Endothelial cell of umbilical vein (primary cell): ENCODE measurements at regions of chr17 and their contacts with region 1.

Region 1: GRCh38 chr17:27892866-27893769 is at the start of gene LYRM9:
- DNase-seq: peak; percentile 91
- H3K4me3 ChIP-seq: peak within 1 kb of the TSS; percentile 8 to 66 (median 61)
- H3K27ac ChIP-seq: peak within 1 kb of the TSS; percentile 30
- H3K4me1 ChIP-seq: peaks cover 11% of the 10 kb centered on the region
- H3K27me3 ChIP-seq: peaks cover 6 to 17% of the 10 kb centered on the region in 2 experiments
- CTCF ChIP-seq: peak; percentile 84 to 97
- POLR2A ChIP-seq: peak; percentile 66
- total RNA-seq, gene LYRM9: 3.1 and 4.0 TPM in 2 replicates

Region 2: GRCh38 chr17:27644586-27644985 is 248.5 kb before region 1 on chr17:
- CTCF ChIA-PET with region 1: no interaction called
- POLR2A ChIA-PET with region 1: no interaction called
- dilution Hi-C with region 1: no loop called
- intact Hi-C with region 1: no loop called
- DNase-seq: no peak
- H3K4me3 ChIP-seq: no peak overlapping the region
- H3K27ac ChIP-seq: no peak overlapping the region
- H3K4me1 ChIP-seq: no peaks in the 10 kb centered on the region
- H3K27me3 ChIP-seq: no peaks in the 10 kb centered on the region
- CTCF ChIP-seq: no peak
- POLR2A ChIP-seq: no peak

Region 3: DNA sequence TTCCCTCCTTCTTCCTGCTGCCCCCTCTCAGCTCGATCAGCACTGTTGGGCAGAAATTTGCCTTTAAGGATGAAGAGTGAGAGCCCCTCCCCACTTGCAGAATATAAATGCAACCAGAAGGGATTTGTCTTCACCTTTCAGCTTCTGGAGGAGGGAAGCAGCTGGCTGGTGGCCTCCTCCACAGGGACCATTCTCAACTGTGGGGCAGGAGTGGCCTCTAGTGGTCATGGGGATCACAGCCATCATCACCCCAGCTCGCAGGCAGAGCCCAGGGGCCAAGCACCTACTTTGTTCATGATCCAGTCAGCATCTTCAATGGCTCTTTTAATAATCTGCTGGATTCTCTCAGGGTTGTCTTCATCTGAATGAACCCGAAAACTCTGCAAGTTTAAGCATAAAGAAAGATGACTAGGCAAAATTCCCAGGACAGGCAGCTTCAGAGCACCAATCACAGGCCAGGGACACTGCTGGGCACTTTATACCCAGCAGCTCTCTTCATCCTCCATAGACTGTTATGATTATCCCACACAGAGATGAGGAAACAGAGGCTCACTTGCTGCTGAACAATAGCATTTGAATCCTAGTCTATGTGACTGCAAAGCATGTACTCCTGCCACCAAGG is 13.0 kb before region 1 on chr17:
- CTCF ChIA-PET with region 1: interaction called, 62 read pairs
- POLR2A ChIA-PET with region 1: no interaction called
- dilution Hi-C with region 1: no loop called
- intact Hi-C with region 1: no loop called
- DNase-seq: peak; percentile 60
- H3K4me3 ChIP-seq: no peak overlapping the region
- H3K27ac ChIP-seq: no peak overlapping the region
- H3K4me1 ChIP-seq: no peaks in the 10 kb centered on the region
- H3K27me3 ChIP-seq: no peaks in the 10 kb centered on the region
- CTCF ChIP-seq: peak; percentile 91 to 93
- POLR2A ChIP-seq: no peak

Region 4: DNA sequence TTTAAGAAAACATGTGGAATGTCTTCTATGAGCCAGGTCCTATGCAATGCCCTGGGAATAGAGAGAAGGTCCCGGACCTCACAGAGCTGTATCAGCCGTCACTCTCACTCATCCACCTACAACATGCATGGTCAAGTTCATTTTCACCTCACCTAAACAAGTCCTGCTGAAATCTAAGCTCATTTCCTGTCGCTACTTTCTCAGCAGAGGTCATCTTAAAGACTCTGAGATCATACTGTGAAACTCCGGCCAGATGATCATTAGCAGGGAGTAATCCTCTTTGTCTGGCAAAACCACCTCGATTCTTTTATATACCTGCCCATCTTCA is 66.2 kb after region 1 on chr17:
- CTCF ChIA-PET with region 1: interaction called, 10 read pairs
- POLR2A ChIA-PET with region 1: no interaction called
- dilution Hi-C with region 1: no loop called
- intact Hi-C with region 1: no loop called
- DNase-seq: no peak
- H3K4me3 ChIP-seq: no peak overlapping the region
- H3K27ac ChIP-seq: no peak overlapping the region
- H3K4me1 ChIP-seq: no peaks in the 10 kb centered on the region
- H3K27me3 ChIP-seq: peaks cover 0 to 4% of the 10 kb centered on the region in 2 experiments
- CTCF ChIP-seq: no peak
- POLR2A ChIP-seq: no peak

Region 5: GRCh38 chr17:28041068-28041843 is 148.1 kb after region 1 on chr17:
- CTCF ChIA-PET with region 1: interaction called, 6 read pairs
- POLR2A ChIA-PET with region 1: interaction called, 7 read pairs
- dilution Hi-C with region 1: no loop called
- intact Hi-C with region 1: loop called (anchors 2 kb)
- DNase-seq: peak; percentile 100
- H3K4me3 ChIP-seq: peak overlapping the region in 1 of 3 experiments; percentile 95
- H3K27ac ChIP-seq: no peak overlapping the region
- H3K4me1 ChIP-seq: peaks cover 31% of the 10 kb centered on the region
- H3K27me3 ChIP-seq: no peaks in the 10 kb centered on the region
- CTCF ChIP-seq: no peak
- POLR2A ChIP-seq: peak; percentile 87

Region 6: DNA sequence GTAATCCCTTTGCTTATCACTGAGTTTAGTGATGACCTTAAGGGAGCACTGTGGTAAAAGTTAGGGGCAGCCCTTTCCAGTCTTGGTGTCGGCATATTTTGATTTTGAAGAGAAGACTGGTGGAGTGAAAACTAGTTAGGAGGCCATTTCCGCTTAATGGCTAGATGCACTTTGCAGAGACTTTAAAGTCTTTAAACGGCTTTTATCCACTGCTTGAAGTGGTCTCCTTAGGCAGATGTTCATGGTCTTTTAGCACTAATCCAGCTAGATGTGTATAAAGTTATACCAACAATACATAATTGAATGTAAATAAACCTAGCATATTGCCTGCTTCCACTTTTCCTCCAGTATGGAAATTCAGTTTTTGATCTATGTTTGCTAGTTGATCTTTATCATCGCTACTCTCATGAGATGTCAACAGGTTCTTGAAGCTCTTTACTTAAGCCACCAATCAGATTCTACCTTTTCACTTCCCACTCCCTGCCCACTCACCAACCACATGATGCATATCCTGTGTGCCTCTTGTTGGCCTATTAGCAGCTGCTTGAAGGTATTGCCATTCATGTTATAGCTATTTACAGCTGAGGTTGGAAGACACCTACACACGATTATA is 281.3 kb after region 1 on chr17:
- CTCF ChIA-PET with region 1: interaction called, 3 read pairs
- POLR2A ChIA-PET with region 1: no interaction called
- dilution Hi-C with region 1: no loop called
- intact Hi-C with region 1: loop called (anchors 5 kb)
- DNase-seq: peak; percentile 29
- H3K4me3 ChIP-seq: no peak overlapping the region
- H3K27ac ChIP-seq: peak overlapping the region; percentile 79
- H3K4me1 ChIP-seq: peaks cover 45% of the 10 kb centered on the region
- H3K27me3 ChIP-seq: no peaks in the 10 kb centered on the region
- CTCF ChIP-seq: no peak
- POLR2A ChIP-seq: no peak

Region 7: GRCh38 chr17:28252436-28252835 is 359.3 kb after region 1 on chr17:
- CTCF ChIA-PET with region 1: interaction called, 28 read pairs
- POLR2A ChIA-PET with region 1: no interaction called
- dilution Hi-C with region 1: no loop called
- intact Hi-C with region 1: loop called (anchors 2 kb)
- DNase-seq: no peak
- H3K4me3 ChIP-seq: no peak overlapping the region
- H3K27ac ChIP-seq: no peak overlapping the region
- H3K4me1 ChIP-seq: peaks cover 3% of the 10 kb centered on the region
- H3K27me3 ChIP-seq: no peaks in the 10 kb centered on the region
- CTCF ChIP-seq: no peak
- POLR2A ChIP-seq: no peak